Activated T-helper 1 cell treated with anti-CD3 and anti-CD28 coated beads, Interleukin-12 subunit alpha, Interleukin-12 subunit beta, Interleukin-2, Interleukin-4 antibody, amounts not matched to agents 30 ng/mL and 10 ng/mL and 1 ng/mL, durations not matched to agents 14 hours and 24 hours and 36 hours (primary cell): ENCODE measurements at regions of chr5 and their contacts with region 1.

Region 1: GRCh38 chr5:138464008-138464387 is 1.3 kb upstream of the EGR1 start:
- DNase-seq: peak; percentile 91
- H3K4me3 Mint-ChIP-seq: peak overlapping the region; percentile 83
- H3K27ac Mint-ChIP-seq: peak overlapping the region; percentile 93
- H3K4me1 Mint-ChIP-seq: peaks cover 55% of the 10 kb centered on the region
- H3K27me3 Mint-ChIP-seq: peaks cover 6% of the 10 kb centered on the region

Region 2: GRCh38 chr5:137833463-137833862 is 630.5 kb before region 1 on chr5:
- intact Hi-C with region 1: no loop called
- DNase-seq: no peak
- H3K4me3 Mint-ChIP-seq: no peak overlapping the region
- H3K27ac Mint-ChIP-seq: no peak overlapping the region
- H3K4me1 Mint-ChIP-seq: no peaks in the 10 kb centered on the region
- H3K27me3 Mint-ChIP-seq: peaks cover 8% of the 10 kb centered on the region

Region 3: DNA sequence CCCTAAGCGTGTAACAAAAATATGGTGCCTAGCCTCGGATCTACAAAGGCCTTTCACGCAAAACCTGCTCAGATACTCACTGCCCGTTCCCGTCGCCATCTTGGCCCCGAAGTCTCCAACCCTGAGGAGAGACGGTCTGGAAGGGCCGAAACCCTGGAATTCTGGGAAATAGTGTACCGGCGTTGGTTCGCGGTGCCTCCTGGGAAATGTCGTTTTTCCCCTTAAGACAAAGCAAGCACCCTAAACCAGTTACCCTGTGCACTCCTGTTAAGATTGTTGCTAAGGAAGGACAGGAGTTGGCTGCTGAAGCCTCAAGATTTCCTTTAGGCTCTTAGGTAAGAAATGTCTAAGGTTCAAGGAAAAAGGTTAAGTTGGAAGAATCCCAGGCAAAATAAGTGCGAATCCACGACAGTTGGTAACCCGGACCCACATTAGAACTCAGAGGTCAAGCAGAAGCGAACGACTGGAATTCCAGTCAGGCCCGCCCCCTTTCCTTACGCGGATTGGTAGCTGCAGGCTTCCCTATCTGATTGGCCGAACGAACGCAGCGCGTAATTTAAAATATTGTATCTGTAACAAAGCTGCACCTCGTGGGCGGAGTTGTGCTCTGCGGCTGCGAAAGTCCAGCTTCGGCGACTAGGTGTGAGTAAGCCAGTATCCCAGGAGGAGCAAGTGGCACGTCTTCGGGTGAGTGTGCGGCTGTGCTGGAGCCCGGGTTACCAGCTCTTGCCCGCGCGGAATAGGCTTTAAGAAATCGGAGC is 285.3 kb before region 1 on chr5 and contains the starts of genes BRD8 and KIF20A:
- intact Hi-C with region 1: loop called (anchors 1 kb)
- DNase-seq: peak; percentile 87
- H3K4me3 Mint-ChIP-seq: no peak within 1 kb of the TSS
- H3K27ac Mint-ChIP-seq: peak within 1 kb of the TSS; percentile 61
- H3K4me1 Mint-ChIP-seq: peaks cover 11% of the 10 kb centered on the region
- H3K27me3 Mint-ChIP-seq: no peaks in the 10 kb centered on the region
- total RNA-seq, gene BRD8: 51.8 and 57.9 TPM in 2 replicates
- total RNA-seq, gene KIF20A: 17.4 and 18.8 TPM in 2 replicates

Region 4: GRCh38 chr5:138352071-138352721 is 111.8 kb before region 1 on chr5 and contains the start of gene KDM3B:
- intact Hi-C with region 1: loop called (anchors 1 kb)
- DNase-seq: peak; percentile 93
- H3K4me3 Mint-ChIP-seq: peak within 1 kb of the TSS; percentile 100
- H3K27ac Mint-ChIP-seq: peak within 1 kb of the TSS; percentile 97
- H3K4me1 Mint-ChIP-seq: peaks cover 51% of the 10 kb centered on the region
- H3K27me3 Mint-ChIP-seq: peaks cover 3% of the 10 kb centered on the region
- total RNA-seq, gene KDM3B: 55.0 and 59.3 TPM in 2 replicates

Region 5: DNA sequence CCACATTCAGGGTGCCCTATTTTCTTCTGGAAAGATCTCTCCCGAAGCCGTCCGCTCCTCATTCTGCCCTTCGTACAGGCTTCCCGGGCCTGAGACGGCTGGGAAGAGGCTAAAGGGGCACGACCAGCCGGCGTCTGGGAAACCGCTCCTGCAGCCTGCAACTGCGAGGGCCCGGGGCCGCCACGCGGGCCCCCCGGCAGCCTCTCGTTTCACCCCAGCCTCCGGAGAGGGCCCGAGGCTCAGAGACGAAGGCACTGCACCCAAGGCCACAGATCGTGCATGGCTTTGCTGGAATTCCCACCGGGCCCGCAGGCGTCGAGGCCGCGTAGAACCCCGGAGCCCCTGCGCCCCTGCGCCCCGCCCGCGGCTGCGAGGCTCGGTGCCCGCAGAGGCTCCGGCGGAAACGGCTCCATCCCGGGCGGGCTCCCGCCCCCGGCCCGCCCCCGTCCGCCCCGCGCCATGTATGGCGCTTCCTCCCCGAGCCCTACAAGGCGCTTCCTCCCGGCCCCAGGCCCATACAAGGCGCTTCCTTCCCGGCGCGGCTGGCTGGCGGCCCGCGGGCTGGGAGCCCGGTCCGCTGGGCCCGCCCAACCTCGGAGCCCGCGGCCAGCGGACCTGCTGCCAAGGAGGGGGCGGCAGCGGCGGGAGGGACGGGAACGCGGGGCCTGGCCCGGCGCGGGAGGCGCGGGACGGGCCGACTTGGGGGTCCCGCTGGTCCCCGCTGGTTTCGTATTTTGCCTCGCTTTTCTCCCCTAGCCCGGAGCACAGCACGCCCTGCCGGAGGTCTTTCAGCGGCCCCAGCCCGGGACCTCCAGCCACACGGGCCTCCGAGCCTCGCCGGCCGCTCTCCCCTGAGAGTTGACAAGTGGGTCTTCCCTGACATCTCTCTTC is 27.9 kb after region 1 on chr5:
- intact Hi-C with region 1: loop called (anchors 1 kb)
- DNase-seq: peak; percentile 83
- H3K4me3 Mint-ChIP-seq: peak overlapping the region; percentile 89
- H3K27ac Mint-ChIP-seq: peak overlapping the region; percentile 68
- H3K4me1 Mint-ChIP-seq: peaks cover 8% of the 10 kb centered on the region
- H3K27me3 Mint-ChIP-seq: peaks cover 34% of the 10 kb centered on the region

Region 6: GRCh38 chr5:138575194-138576015 is 111.4 kb after region 1 on chr5 and contains the start of gene HSPA9:
- intact Hi-C with region 1: loop called (anchors 1 kb)
- DNase-seq: peak; percentile 97
- H3K4me3 Mint-ChIP-seq: peak within 1 kb of the TSS; percentile 95
- H3K27ac Mint-ChIP-seq: peak within 1 kb of the TSS; percentile 100
- H3K4me1 Mint-ChIP-seq: peaks cover 22% of the 10 kb centered on the region
- H3K27me3 Mint-ChIP-seq: no peaks in the 10 kb centered on the region
- total RNA-seq, gene HSPA9: 372 and 383 TPM in 2 replicates

Region 7: DNA sequence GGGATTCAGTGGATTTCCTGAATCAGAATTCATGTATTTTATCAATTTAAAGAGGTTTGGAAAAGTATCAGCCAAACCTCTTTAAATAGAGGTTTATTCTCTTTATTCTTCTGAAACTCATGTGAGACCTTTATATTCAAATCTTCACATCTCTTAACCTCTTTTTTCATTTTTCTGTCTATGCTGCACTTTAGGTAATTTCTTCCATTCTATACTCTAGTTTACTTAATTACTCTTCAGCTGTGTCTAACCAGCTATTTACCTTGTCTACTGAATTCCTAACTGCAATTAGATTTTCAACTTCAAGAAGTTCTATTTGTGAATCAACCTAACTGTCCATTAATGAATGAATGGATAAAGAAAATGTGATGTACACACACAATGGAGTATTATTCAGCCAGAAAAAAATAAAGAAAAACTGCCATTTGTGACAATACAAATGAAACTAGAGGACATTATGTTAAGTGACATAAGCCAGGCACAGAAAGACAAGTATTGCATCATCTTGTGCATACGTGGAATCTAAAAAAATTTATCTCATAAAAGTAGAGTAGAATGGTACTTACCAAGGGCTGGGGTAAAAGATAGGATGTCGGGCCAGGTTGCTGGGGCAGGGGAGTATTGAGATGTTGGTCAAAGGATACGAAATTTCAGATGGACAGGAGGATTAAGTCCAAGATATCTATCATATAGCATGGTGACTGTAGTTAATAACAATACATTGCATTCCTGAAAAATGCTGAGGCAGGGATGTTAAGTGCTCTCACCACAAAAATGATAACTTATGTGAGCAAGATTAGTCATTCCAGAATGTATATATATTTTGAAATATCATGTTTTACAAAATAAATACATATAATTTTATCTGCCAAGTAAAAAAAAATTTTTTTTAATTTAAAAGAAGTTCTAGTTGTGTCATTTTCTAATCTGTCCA is 540.6 kb after region 1 on chr5:
- intact Hi-C with region 1: no loop called
- DNase-seq: no peak
- H3K4me3 Mint-ChIP-seq: no peak overlapping the region
- H3K27ac Mint-ChIP-seq: no peak overlapping the region
- H3K4me1 Mint-ChIP-seq: no peaks in the 10 kb centered on the region
- H3K27me3 Mint-ChIP-seq: no peaks in the 10 kb centered on the region

Region 8: GRCh38 chr5:139341650-139342422 is 877.8 kb after region 1 on chr5 and contains the start of gene PAIP2:
- intact Hi-C with region 1: loop called (anchors 2 kb)
- DNase-seq: peak; percentile 95
- H3K4me3 Mint-ChIP-seq: peak within 1 kb of the TSS; percentile 94
- H3K27ac Mint-ChIP-seq: peak within 1 kb of the TSS; percentile 95
- H3K4me1 Mint-ChIP-seq: peaks cover 46% of the 10 kb centered on the region
- H3K27me3 Mint-ChIP-seq: no peaks in the 10 kb centered on the region
- total RNA-seq, gene PAIP2: 88.4 and 97.3 TPM in 2 replicates